GM12878 (cell line): ENCODE measurements at regions of chr20 and their contacts with region 1.

Region 1: GRCh38 chr20:49846206-49846807 is 33.7 kb downstream of the SLC9A8 start:
- DNase-seq: no peak
- ATAC-seq: peak; percentile 96
- H3K4me3 ChIP-seq: no peak overlapping the region
- H3K27ac ChIP-seq: no peak overlapping the region
- H3K4me1 ChIP-seq: peaks cover 4% of the 10 kb centered on the region; the same call in 1 of the 2 replicates
- H3K27me3 ChIP-seq: no peaks in the 10 kb centered on the region
- CTCF ChIP-seq: peak; percentile 51 to 77 (median 60)
- EP300 ChIP-seq: no peak
- POLR2A ChIP-seq: no peak
- RAD21 ChIP-seq: peak; percentile 86

Region 2: DNA sequence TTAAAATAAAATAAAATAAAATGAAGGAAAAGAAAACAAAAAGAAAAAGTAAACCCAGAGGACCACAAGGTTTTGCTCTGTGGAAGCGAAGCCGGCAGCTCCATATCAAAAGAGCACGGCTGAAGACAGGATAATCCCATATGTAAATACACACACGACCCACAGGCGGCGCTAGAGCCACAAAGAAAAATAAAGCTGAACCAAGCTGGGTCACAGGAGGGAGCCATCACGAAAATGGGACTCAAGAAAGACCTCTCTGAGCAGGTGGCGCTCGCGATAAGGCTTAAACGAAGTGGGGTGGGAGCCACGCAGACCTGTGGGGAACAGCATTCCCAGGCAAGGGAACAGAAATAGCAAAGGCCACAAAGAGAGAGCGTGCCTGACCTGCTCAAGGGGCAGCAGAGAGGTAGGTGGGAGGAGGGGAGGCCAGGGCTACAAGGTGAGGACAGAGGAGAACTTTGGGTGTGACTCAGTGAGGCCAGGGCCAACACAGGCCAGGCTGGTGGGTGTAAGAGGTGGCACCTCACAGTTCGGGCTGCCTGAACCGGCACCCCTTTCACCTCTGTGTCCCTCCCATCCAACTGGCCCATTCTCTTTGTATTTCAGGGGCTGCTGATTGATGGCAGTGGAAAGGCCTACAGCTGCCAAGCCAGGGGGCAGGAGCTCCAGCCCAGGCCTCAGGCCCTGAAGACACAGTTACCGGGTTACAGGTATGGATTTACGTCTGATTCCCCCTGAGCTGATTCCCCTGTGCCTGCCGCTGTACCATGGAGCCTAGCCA is 304.4 kb before region 1 on chr20:
- CTCF ChIA-PET with region 1: interaction called, 19 read pairs
- POLR2A ChIA-PET with region 1: no interaction called
- RAD21 ChIA-PET with region 1: interaction called, 7 read pairs
- SMC1A ChIA-PET with region 1: interaction called, 15 read pairs
- in situ Hi-C with region 1: no loop called
- intact Hi-C with region 1: loop called (anchors 2 kb)
- DNase-seq: peak; percentile 35
- ATAC-seq: peak; percentile 91
- H3K4me3 ChIP-seq: no peak overlapping the region
- H3K27ac ChIP-seq: no peak overlapping the region
- H3K4me1 ChIP-seq: no peaks in the 10 kb centered on the region
- H3K27me3 ChIP-seq: no peaks in the 10 kb centered on the region
- CTCF ChIP-seq: peak; percentile 79 to 95 (median 95)
- EP300 ChIP-seq: no peak
- POLR2A ChIP-seq: no peak
- RAD21 ChIP-seq: peak; percentile 91

Region 3: GRCh38 chr20:49631061-49631788 is 215.1 kb before region 1 on chr20:
- CTCF ChIA-PET with region 1: interaction called, 16 read pairs
- POLR2A ChIA-PET with region 1: no interaction called
- RAD21 ChIA-PET with region 1: interaction called, 6 read pairs
- SMC1A ChIA-PET with region 1: interaction called, 7 read pairs
- in situ Hi-C with region 1: no loop called
- intact Hi-C with region 1: no loop called
- DNase-seq: no peak
- ATAC-seq: peak; percentile 75
- H3K4me3 ChIP-seq: no peak overlapping the region
- H3K27ac ChIP-seq: peak overlapping the region; percentile 77
- H3K4me1 ChIP-seq: peaks cover 53% of the 10 kb centered on the region
- H3K27me3 ChIP-seq: no peaks in the 10 kb centered on the region
- CTCF ChIP-seq: no peak
- EP300 ChIP-seq: peak in 1 of 2 experiments; percentile 39; a peak in 1 of 4 replicates
- POLR2A ChIP-seq: no peak; the same call in 1 of the 2 replicates
- RAD21 ChIP-seq: no peak

Region 4: DNA sequence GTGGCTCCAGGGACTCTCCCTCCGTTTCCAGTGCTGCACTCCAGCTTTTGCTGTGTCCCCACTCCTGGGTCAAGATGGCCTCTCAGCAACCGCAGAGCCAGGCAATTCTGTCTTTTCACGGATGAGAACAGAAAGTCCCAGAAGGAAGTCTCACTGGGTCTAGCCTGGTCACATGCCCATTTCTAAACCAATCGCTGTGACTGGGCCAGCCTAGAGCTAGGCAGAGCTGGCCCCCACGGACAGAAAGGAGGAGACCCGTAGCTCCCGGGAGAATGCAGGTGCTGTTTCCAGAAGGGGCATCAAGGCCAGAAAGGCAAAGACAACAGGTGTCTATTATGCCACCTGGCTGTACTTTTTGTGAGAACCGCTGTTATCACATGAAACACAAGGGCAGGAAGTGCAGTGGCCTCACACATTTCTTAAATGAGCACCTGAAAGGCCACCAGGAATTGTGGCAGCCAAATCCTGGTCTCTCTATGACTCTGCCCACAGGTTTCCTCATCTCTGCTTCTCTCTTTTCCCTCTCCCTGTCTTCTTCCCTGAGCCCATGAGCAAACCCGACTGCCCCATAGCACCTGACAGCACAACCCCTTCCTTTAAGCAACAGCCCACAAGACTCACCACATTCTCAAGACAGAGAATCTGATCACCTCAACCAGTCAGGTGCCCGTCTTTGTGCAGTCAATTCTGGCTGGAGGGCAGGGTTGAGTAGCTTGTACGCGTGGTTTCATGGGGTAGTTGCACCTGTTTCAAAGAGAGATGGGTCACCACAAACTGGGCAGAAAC is 95.5 kb before region 1 on chr20:
- CTCF ChIA-PET with region 1: interaction called, 8 read pairs
- POLR2A ChIA-PET with region 1: no interaction called
- RAD21 ChIA-PET with region 1: no interaction called
- SMC1A ChIA-PET with region 1: interaction called, 12 read pairs
- in situ Hi-C with region 1: no loop called
- intact Hi-C with region 1: no loop called
- DNase-seq: peak; percentile 86
- ATAC-seq: peak; percentile 92
- H3K4me3 ChIP-seq: peak overlapping the region; percentile 52; the same call in 1 of the 2 replicates
- H3K27ac ChIP-seq: peak overlapping the region; percentile 81
- H3K4me1 ChIP-seq: peaks cover 17% of the 10 kb centered on the region
- H3K27me3 ChIP-seq: no peaks in the 10 kb centered on the region
- CTCF ChIP-seq: no peak
- EP300 ChIP-seq: peak; percentile 36 to 54; a peak in 2 of 4 replicates
- POLR2A ChIP-seq: no peak
- RAD21 ChIP-seq: no peak

Region 5: DNA sequence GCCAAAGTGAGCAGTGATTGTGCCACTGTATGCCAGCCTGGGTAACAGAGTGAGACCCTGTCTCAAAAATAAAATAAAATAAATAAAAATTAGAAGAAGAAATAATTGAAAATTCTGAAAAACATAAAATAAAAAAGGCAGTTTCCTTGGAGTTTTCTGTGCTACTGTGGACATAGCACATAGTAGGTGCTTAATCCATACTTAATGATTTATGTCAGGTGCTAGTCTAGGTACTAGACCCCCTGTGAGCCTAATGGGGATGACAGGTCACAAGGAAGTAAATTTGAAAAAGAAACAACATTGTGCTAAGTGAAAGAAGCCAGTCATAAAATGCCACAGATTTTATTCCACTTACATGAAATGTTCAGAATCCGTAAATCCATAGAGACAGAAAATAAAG is 42.9 kb before region 1 on chr20:
- CTCF ChIA-PET with region 1: interaction called, 15 read pairs
- POLR2A ChIA-PET with region 1: no interaction called
- RAD21 ChIA-PET with region 1: interaction called, 15 read pairs
- SMC1A ChIA-PET with region 1: interaction called, 12 read pairs
- in situ Hi-C with region 1: no loop called
- intact Hi-C with region 1: no loop called
- DNase-seq: no peak
- ATAC-seq: no peak
- H3K4me3 ChIP-seq: no peak overlapping the region
- H3K27ac ChIP-seq: no peak overlapping the region
- H3K4me1 ChIP-seq: peaks cover 43% of the 10 kb centered on the region
- H3K27me3 ChIP-seq: no peaks in the 10 kb centered on the region
- CTCF ChIP-seq: no peak
- EP300 ChIP-seq: no peak
- POLR2A ChIP-seq: no peak
- RAD21 ChIP-seq: no peak

Region 6: DNA sequence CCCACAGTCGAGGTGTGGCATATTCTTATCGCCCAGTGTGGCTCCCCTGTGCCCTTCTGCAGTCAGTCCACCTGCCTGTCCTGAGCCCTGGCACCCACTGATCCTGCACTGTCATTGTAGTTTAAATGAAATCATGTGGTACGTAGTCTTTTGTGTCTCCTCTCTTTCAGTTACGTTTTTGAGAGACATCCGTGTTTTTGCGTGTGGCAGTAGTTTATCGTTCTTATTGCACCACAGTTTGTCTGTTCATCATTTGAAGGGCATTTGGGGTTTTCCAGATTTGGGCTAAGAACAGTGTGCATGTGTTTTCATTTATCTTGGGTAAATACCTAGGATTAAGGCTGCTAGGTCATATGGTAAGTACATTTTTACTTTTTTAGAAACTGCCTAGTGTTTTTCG is 19.7 kb after region 1 on chr20:
- CTCF ChIA-PET with region 1: interaction called, 12 read pairs
- POLR2A ChIA-PET with region 1: no interaction called
- RAD21 ChIA-PET with region 1: interaction called, 3 read pairs
- SMC1A ChIA-PET with region 1: interaction called, 6 read pairs
- in situ Hi-C with region 1: no loop called
- intact Hi-C with region 1: no loop called
- DNase-seq: peak; percentile 60
- ATAC-seq: peak; percentile 76
- H3K4me3 ChIP-seq: no peak overlapping the region
- H3K27ac ChIP-seq: peak overlapping the region; percentile 84
- H3K4me1 ChIP-seq: peaks cover 19% of the 10 kb centered on the region
- H3K27me3 ChIP-seq: no peaks in the 10 kb centered on the region
- CTCF ChIP-seq: no peak
- EP300 ChIP-seq: no peak
- POLR2A ChIP-seq: no peak; the same call in 1 of the 2 replicates
- RAD21 ChIP-seq: no peak

Region 7: DNA sequence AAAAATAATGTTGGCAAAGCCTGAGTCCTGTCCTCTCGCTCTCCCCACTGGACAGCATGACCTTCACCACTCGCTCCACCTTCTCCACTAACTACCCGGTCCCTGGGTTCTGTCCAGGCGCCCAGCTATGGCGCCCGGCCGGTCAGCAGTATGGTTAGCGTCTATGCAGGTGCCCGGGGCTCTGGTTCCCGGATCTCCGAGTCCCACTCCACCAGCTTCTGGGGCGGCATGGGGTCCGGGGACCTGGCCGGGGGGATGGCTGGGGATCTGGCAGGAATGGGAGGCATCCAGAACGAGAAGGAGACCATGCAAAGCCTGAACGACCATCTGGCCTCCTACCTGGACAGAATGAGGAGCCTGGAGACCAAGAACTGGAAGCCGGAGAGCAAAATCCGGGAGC is 110.4 kb after region 1 on chr20:
- CTCF ChIA-PET with region 1: no interaction called
- POLR2A ChIA-PET with region 1: no interaction called
- RAD21 ChIA-PET with region 1: no interaction called
- SMC1A ChIA-PET with region 1: no interaction called
- in situ Hi-C with region 1: no loop called
- intact Hi-C with region 1: no loop called
- DNase-seq: no peak
- ATAC-seq: no peak
- H3K4me3 ChIP-seq: no peak overlapping the region
- H3K27ac ChIP-seq: no peak overlapping the region; the same call in 1 of the 2 replicates
- H3K4me1 ChIP-seq: peaks cover 14% of the 10 kb centered on the region
- H3K27me3 ChIP-seq: no peaks in the 10 kb centered on the region
- CTCF ChIP-seq: no peak
- EP300 ChIP-seq: no peak
- POLR2A ChIP-seq: no peak
- RAD21 ChIP-seq: no peak